ENCODE measurements at regions of chr22 and their contacts with region 1.

Region 1: GRCh38 chr22:41448189-41448808 is 1.7 kb upstream of the TOB2 start:
- DNase-seq: peak; percentile 96
- H3K4me3 ChIP-seq: peak overlapping the region; percentile 86
- CTCF ChIP-seq: no peak

Region 2: GRCh38 chr22:41320416-41321240 is 127.7 kb before region 1 on chr22:
- CTCF ChIA-PET with region 1: no interaction called
- POLR2A ChIA-PET with region 1: no interaction called
- DNase-seq: no peak
- H3K4me3 ChIP-seq: no peak overlapping the region
- CTCF ChIP-seq: no peak

Region 3: GRCh38 chr22:41381329-41382097 is 66.8 kb before region 1 on chr22 and contains the start of gene TEF:
- CTCF ChIA-PET with region 1: interaction called, 3 read pairs
- POLR2A ChIA-PET with region 1: interaction called, 27 read pairs
- DNase-seq: peak; percentile 91
- H3K4me3 ChIP-seq: peak within 1 kb of the TSS; percentile 79
- CTCF ChIP-seq: no peak

Region 4: DNA sequence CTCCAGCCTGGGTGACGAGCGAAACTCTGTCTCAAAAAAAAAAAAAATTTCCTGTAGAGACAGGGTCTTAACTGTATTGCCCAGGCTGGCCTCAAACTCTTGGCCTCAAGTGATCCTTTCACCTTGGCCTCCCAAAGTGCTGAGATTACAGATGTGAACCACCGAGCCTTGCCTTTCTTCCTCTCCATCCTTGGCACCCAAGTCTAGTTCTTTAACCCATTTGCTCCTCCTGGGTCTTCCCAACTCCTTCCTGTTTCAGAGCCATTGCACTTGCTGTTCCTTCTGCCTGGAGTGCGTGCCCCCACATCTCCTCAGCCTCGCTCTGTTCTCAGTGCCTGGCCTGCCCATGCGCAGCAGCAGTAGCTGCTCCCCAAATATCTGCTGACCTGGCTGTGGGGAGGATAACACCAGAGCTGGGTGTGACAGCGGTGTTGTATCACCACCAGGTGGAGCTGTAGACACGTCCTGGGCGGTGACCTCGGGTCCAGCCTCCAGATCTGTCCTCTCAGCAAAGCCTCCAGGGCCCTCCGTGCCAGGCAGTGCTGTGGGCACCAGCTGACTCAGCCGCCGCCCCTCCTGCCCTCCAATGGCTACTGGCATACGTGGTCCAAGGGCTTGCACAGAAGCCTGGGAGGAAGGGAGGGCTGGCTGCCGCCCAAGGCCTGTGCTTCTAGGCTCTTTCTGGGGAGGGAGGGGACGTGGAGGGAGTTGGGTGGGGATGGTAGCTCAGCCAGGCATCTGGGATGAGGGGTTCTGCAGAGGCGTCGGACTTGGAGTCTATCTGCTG is 44.6 kb before region 1 on chr22:
- CTCF ChIA-PET with region 1: interaction called, 13 read pairs
- POLR2A ChIA-PET with region 1: interaction called, 9 read pairs
- DNase-seq: no peak
- H3K4me3 ChIP-seq: no peak overlapping the region
- CTCF ChIP-seq: peak; percentile 92

Region 5: GRCh38 chr22:41429232-41429950 is 18.9 kb before region 1 on chr22:
- CTCF ChIA-PET with region 1: no interaction called
- POLR2A ChIA-PET with region 1: interaction called, 13 read pairs
- DNase-seq: no peak
- H3K4me3 ChIP-seq: no peak overlapping the region
- CTCF ChIP-seq: no peak

Region 6: GRCh38 chr22:41436322-41437113 is 11.8 kb before region 1 on chr22:
- CTCF ChIA-PET with region 1: interaction called, 6 read pairs
- POLR2A ChIA-PET with region 1: interaction called, 13 read pairs
- DNase-seq: no peak
- H3K4me3 ChIP-seq: no peak overlapping the region
- CTCF ChIP-seq: no peak

Region 7: DNA sequence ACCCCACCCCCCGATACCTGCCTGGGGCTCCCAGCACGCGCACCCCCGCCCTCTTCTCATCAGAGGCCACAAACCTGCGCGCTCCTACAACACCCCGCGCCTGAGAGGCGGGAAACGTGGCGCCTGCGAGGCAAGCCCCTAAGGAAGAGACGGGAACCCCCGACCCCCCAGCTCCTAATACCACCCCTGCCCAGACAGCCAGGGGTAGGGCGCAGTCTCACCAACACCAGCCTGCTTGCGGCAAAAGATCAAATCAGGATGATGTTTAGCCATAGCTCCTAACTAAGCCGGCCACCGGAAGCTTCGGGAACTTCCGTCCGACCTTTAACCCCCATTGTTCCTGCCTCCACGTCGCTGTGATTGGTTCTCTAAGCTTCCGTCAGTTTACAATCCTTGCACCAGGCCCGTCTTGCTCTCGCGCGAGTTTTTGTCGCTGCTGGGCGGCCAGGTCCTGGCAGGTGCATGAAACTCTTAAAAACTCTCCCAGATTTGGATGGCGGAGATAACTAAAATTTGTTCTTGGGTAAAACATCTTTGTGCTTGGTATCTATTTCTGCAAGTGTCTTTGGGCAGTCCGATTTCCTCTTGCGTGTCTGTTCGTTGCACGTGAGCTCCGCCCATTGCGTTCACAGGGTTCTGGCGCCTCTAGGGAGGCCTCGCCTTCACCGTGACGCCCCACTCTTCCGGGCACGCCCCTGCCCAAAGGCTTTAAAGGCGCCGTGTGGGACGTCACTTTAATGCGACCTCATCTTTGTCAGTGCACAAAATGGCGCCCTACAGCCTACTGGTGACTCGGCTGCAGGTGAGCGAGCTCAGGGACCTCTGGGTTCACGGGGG is 20.3 kb after region 1 on chr22 and contains the starts of genes ACO2 and PHF5A:
- CTCF ChIA-PET with region 1: interaction called, 3 read pairs
- POLR2A ChIA-PET with region 1: interaction called, 50 read pairs
- DNase-seq: peak; percentile 89
- H3K4me3 ChIP-seq: peak within 1 kb of the TSS; percentile 95
- CTCF ChIP-seq: no peak

Measured in AG04449 (cell line).